PC-9 (cell line): ENCODE measurements at regions of chr6 and their contacts with region 1.

Region 1: GRCh38 chr6:107423474-107423990 is 35.8 kb downstream of the PDSS2 start:
- DNase-seq: no peak
- H3K4me3 ChIP-seq: no peak overlapping the region
- H3K27ac ChIP-seq: no peak overlapping the region
- H3K4me1 ChIP-seq: no peaks in the 10 kb centered on the region; the same call in 1 of the 2 replicates
- H3K27me3 ChIP-seq: no peaks in the 10 kb centered on the region
- CTCF ChIP-seq: no peak

Region 2: DNA sequence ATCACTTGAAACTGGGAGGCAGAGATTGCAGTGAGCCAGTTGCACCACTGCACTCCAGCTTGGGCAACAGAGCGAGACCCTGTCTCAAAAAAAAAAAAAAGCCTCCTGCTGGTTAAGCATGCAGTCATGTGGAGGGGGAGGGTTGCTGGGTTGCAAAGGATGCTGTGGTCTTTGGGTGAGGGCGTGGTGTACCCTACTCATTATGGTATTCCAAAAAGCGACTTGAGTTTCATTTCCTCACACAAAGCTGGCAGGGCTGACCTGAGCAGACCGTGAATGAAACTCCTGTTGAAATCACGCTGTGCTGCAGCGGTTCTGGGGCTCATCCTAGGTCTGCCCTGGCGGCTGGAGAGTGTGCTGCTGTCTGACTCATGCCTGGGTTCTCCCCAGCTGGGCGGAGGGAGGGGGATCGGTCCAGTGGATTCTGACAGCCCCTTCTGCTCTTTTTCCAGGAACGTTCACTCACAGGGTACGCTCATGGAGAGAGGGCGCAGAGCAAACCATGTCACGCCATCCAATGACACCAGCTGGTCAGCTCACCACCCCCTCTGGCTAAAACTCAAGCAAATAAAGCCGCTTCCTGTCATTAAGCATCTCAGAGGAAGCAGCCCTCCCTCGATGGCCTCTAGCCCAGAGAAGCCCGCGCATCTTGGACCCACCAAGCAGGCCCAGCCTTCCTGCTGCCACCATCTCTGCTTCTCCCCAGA is 234.4 kb after region 1 on chr6:
- CTCF ChIA-PET with region 1: no interaction called
- POLR2A ChIA-PET with region 1: interaction called, 13 read pairs
- intact Hi-C with region 1: no loop called
- DNase-seq: peak; percentile 36 to 44
- H3K4me3 ChIP-seq: no peak overlapping the region
- H3K27ac ChIP-seq: 0 out of 2 replicates have a peak overlapping the region, but pooled peaks have one; percentile 5
- H3K4me1 ChIP-seq: peaks cover 27% of the 10 kb centered on the region
- H3K27me3 ChIP-seq: no peaks in the 10 kb centered on the region
- CTCF ChIP-seq: no peak